Activated CD4-positive, alpha-beta T cell treated with anti-CD3 and anti-CD28 coated beads for 36 hours (primary cell): ENCODE measurements at regions of chr11 and their contacts with region 1.

Region 1: DNA sequence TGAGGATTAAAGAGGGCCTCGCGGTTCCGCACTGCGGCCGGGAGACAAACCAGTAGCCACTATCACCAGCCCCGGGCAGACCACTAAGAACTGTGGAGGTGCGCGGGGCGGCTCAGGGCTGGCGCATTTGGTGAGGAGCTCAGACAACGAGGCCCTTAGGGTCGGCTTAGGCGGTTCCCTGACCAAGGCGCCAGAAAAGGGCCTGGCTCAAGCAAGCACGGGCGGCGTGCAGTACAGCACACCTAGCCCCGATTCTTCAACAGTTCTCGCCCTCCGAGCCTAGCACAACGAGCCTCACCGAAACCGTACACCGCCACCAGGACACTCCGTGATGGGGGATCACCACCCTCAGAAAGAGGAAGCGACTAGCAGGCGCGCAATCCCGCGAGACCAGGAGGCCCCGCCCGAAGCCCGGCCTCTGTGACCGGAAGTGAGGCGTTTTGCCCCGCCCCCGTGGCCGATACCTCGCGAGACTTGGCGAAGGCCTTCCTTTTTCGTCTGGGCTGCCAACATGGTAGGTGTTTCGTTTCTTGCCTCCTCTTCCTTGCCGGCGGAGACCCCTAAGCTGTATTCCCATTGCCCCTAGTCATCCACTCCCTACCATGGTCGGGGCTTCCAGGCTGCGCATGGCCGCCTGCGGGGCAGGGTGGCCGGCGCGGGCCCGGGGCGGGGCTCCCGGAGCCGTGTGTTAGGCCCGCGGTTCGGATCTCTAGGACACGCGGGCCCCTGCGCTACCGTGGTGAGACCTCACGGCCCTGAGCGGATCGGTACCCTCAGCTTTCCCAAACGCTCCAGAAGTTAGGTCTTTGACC is at the starts of genes RPL27A and TRIM66:
- DNase-seq: peak; percentile 99
- ATAC-seq: peak; percentile 96
- H3K4me3 Mint-ChIP-seq: peak within 1 kb of the TSS; percentile 97
- H3K27ac Mint-ChIP-seq: peak within 1 kb of the TSS; percentile 98
- H3K4me1 Mint-ChIP-seq: peaks cover 46% of the 10 kb centered on the region
- H3K27me3 Mint-ChIP-seq: no peaks in the 10 kb centered on the region
- total RNA-seq, gene RPL27A: 688 to 1,021 TPM
- total RNA-seq, gene TRIM66: 18.3 to 19.5 TPM

Region 2: DNA sequence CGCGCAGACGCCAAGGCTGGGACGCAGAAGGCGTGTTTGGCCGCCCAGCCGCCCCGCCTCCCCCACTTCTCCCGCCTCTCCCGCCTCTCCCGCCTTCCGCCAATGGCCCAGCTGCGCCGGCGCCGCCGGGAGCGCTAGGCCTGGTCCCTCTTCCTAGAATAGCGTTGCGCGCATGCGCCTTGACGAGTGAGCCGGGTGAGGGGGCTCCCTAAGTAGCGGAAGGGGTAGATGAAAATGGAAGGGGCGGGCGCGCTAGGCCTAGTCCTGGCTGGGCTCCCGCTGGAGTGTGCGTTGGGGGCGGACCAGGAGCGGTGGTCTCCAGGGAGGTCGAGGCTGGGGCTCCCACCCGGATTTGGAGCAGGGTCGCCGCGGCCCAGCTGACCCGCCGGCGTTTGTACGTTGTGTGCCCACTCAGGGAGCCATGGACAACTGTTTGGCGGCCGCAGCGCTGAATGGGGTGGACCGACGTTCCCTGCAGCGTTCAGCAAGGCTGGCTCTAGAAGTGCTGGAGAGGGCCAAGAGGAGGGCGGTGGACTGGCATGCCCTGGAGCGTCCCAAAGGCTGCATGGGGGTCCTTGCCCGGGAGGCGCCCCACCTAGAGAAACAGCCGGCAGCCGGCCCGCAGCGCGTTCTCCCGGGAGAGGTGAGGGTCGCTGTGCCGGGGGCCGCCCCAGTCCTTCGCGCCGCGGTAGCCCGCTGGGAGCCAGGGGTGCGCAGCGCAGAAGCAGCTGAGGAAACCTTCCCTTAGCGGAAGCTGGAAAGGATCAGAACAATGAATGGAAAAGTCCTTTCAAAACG is 228.7 kb after region 1 on chr11 and contains the start of gene AKIP1:
- CTCF ChIA-PET with region 1: no interaction called
- POLR2A ChIA-PET with region 1: no interaction called
- intact Hi-C with region 1: loop called (anchors 1 to 5 kb)
- DNase-seq: peak; percentile 94
- ATAC-seq: peak; percentile 76
- H3K4me3 Mint-ChIP-seq: peak within 1 kb of the TSS; percentile 86
- H3K27ac Mint-ChIP-seq: peak within 1 kb of the TSS; percentile 89
- H3K4me1 Mint-ChIP-seq: peaks cover 45% of the 10 kb centered on the region
- H3K27me3 Mint-ChIP-seq: peaks cover 6% of the 10 kb centered on the region
- total RNA-seq, gene AKIP1: 29.8 to 32.2 TPM

Region 3: GRCh38 chr11:8948886-8949285 is 266.4 kb after region 1 on chr11:
- CTCF ChIA-PET with region 1: no interaction called
- POLR2A ChIA-PET with region 1: no interaction called
- intact Hi-C with region 1: no loop called
- DNase-seq: no peak
- ATAC-seq: no peak
- H3K4me3 Mint-ChIP-seq: no peak overlapping the region
- H3K27ac Mint-ChIP-seq: no peak overlapping the region
- H3K4me1 Mint-ChIP-seq: no peaks in the 10 kb centered on the region
- H3K27me3 Mint-ChIP-seq: no peaks in the 10 kb centered on the region

Region 4: DNA sequence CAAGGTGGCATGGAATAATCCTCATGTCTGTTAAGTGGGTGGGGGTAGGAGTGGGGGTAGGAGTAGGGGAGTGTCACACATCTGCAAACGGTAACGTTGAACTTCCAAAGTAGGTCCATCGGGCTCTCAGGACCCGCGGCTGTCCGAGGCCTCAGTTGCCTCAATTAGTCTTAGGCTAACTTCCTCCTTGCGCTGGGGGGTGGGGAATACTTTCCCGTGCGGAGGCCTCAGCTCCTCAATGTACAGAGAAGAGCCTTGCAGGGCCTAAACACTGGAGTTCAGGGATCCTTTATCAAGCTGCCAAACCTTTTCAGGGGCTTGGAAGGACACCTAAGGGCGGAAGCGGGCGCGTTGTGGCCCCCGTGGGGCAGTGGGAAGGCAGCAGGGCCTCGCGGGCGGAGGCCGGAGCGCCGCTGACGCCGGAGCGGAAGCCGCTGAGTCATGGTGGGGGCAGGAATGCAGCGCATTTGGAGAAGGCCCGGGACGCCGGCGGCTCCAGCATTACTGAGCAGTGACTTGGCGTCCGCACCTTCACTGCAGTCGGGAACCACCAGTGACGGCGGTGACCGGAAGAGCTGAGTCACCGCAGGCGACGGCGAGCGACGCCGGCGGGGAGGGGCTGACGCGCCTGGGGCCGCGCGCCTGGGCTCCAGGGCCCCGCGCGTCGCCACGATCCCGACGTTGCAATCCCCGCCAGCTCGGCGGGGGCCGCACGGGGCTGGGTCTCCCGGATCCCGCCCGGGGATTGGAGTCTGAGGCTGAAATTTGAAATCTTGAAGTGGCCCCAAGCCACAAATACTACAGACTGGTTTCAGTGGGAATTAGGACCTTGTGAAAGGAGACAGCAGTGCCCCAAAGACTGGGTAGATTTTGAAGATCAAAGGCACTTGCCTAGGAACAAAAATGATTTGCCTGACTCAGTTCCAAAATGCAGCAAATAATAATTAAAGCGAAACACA is 681.7 kb after region 1 on chr11:
- CTCF ChIA-PET with region 1: no interaction called
- POLR2A ChIA-PET with region 1: no interaction called
- intact Hi-C with region 1: loop called in 1 of 2 experiments (anchors 5 kb)
- DNase-seq: peak; percentile 92
- ATAC-seq: peak; percentile 88
- H3K4me3 Mint-ChIP-seq: peak overlapping the region; percentile 62
- H3K27ac Mint-ChIP-seq: peak overlapping the region; percentile 88
- H3K4me1 Mint-ChIP-seq: peaks cover 30% of the 10 kb centered on the region
- H3K27me3 Mint-ChIP-seq: no peaks in the 10 kb centered on the region